Caco-2 (cell line): ENCODE measurements at regions of chr6 and their contacts with region 1.

Region 1: GRCh38 chr6:114747987-114748630 is 405.3 kb upstream of the HS3ST5 start:
- DNase-seq: peak; percentile 33 to 64
- H3K4me3 ChIP-seq: no peak overlapping the region
- H3K4me3 Mint-ChIP-seq: no peak overlapping the region
- H3K27ac Mint-ChIP-seq: no peak overlapping the region
- H3K4me1 ChIP-seq: no peaks in the 10 kb centered on the region
- H3K4me1 Mint-ChIP-seq: no peaks in the 10 kb centered on the region
- H3K27me3 ChIP-seq: no peaks in the 10 kb centered on the region
- H3K27me3 Mint-ChIP-seq: no peaks in the 10 kb centered on the region
- CTCF ChIP-seq: peak; percentile 67 to 73

Region 2: GRCh38 chr6:114342826-114343780 is 405.0 kb before region 1 on chr6 and contains the start of gene HS3ST5:
- CTCF ChIA-PET with region 1: no interaction called
- POLR2A ChIA-PET with region 1: no interaction called
- intact Hi-C with region 1: loop called (anchors 5 kb)
- DNase-seq: peak; percentile 64 to 79
- H3K4me3 ChIP-seq: peak within 1 kb of the TSS; percentile 54
- H3K4me3 Mint-ChIP-seq: peak within 1 kb of the TSS; percentile 76
- H3K27ac Mint-ChIP-seq: no peak within 1 kb of the TSS
- H3K4me1 ChIP-seq: 0 out of 2 replicates have a peak, but pooled peaks cover 4% of the 10 kb centered on the region
- H3K4me1 Mint-ChIP-seq: no peaks in the 10 kb centered on the region
- H3K27me3 ChIP-seq: no peaks in the 10 kb centered on the region
- H3K27me3 Mint-ChIP-seq: peaks cover 9% of the 10 kb centered on the region
- CTCF ChIP-seq: peak; percentile 58 to 66
- total RNA-seq, gene HS3ST5: 0.28 and 0.29 TPM in 2 replicates

Region 3: DNA sequence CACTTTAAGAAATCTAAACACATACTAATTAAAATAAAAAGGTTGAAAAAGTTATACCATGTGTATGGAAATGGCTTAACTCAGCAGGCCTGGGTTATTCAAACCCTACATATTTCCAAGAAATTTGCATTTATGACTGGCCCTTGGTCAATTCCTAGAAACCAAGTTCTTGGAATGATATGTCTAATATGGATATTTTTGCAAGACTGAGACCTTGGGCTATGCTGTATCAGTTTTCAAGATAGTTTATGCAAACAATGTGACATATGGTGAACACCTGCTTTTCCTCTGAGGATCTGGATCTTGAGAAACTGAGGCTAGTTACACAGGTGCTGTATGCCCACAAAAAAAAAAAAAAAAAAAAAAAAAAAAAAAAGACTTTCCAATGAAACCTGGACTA is 131.6 kb after region 1 on chr6:
- CTCF ChIA-PET with region 1: no interaction called
- POLR2A ChIA-PET with region 1: no interaction called
- intact Hi-C with region 1: loop called (anchors 10 kb)
- DNase-seq: no peak
- H3K4me3 ChIP-seq: no peak overlapping the region
- H3K4me3 Mint-ChIP-seq: no peak overlapping the region
- H3K27ac Mint-ChIP-seq: no peak overlapping the region
- H3K4me1 ChIP-seq: no peaks in the 10 kb centered on the region
- H3K4me1 Mint-ChIP-seq: no peaks in the 10 kb centered on the region
- H3K27me3 ChIP-seq: no peaks in the 10 kb centered on the region
- H3K27me3 Mint-ChIP-seq: peaks cover 4% of the 10 kb centered on the region
- CTCF ChIP-seq: no peak

Region 4: DNA sequence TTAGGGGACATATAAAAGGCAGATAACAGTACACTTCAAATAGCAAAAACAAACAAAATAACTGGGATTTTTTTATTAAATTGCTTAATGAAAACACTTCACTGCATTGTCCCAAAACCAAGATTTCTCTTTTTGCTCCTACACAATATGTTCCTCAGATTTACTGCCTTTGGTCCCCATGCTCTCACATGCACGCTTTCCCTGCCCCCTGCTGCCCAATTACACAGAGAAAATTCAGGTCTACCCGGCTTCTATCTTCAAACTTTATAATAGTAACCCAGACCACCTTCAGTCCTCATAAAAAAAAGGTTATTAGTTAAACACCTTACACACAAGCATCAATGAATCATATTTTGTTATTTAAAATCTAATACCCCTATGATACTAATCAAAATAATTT is 268.5 kb after region 1 on chr6:
- CTCF ChIA-PET with region 1: no interaction called
- POLR2A ChIA-PET with region 1: no interaction called
- intact Hi-C with region 1: loop called (anchors 2 kb)
- DNase-seq: peak in 1 of 2 experiments; percentile 6
- H3K4me3 ChIP-seq: no peak overlapping the region
- H3K4me3 Mint-ChIP-seq: no peak overlapping the region
- H3K27ac Mint-ChIP-seq: no peak overlapping the region
- H3K4me1 ChIP-seq: no peaks in the 10 kb centered on the region
- H3K4me1 Mint-ChIP-seq: no peaks in the 10 kb centered on the region
- H3K27me3 ChIP-seq: no peaks in the 10 kb centered on the region
- H3K27me3 Mint-ChIP-seq: no peaks in the 10 kb centered on the region
- CTCF ChIP-seq: no peak

Region 5: DNA sequence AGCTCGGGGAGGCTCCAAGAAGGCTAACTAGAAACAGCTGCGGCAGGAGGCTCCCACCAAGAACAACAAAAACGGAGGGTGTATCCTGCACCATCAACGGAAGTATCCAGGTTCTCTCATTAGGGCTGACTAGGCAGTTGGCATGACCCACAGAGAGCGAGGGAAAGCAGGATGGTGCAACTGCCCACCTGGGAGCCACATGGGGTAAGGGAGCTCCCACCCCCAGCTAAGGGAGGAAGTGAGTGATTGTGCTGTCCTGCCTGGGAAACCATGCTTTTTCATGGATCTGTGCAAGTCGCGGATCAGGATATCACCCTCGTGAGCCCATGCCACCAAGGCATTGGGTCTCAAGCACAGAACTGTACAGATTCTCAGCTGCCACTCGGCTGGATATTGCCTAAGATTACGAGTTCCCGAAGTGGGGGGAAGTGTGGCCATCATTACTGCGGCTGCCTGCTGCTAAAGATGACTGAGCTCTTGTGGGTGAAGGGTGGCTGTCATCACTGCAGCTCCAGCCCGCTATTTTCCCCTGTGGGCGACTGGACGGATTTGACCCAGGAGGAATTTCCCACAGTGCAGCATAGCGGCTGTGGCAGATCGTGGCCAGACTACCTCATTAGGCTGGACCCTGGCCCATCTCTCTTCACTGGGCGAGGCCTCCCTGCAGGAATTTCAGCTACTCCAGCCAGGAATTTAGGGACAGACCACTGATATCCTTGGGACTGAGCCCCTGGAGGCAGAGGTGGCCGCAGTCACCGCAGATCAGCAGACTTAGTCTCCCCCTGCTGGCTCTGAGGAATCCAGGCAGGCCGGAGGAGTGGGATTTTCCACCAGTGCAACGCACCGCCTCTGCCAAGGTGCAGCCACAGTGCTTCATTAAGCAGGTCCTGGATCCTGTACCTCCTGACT is 796.9 kb after region 1 on chr6:
- CTCF ChIA-PET with region 1: no interaction called
- POLR2A ChIA-PET with region 1: no interaction called
- intact Hi-C with region 1: loop called (anchors 2 kb)
- DNase-seq: peak; percentile 47 to 59
- H3K4me3 ChIP-seq: peak overlapping the region; percentile 9; the same call in 1 of the 2 replicates
- H3K4me3 Mint-ChIP-seq: no peak overlapping the region
- H3K27ac Mint-ChIP-seq: no peak overlapping the region
- H3K4me1 ChIP-seq: no peaks in the 10 kb centered on the region
- H3K4me1 Mint-ChIP-seq: no peaks in the 10 kb centered on the region
- H3K27me3 ChIP-seq: no peaks in the 10 kb centered on the region
- H3K27me3 Mint-ChIP-seq: peaks cover 5% of the 10 kb centered on the region
- CTCF ChIP-seq: peak; percentile 56 to 59

Region 6: GRCh38 chr6:115896538-115897129 is 1148.5 kb after region 1 on chr6:
- CTCF ChIA-PET with region 1: no interaction called
- POLR2A ChIA-PET with region 1: no interaction called
- intact Hi-C with region 1: loop called (anchors 1 kb)
- DNase-seq: peak in 1 of 2 experiments; percentile 46
- H3K4me3 ChIP-seq: no peak overlapping the region
- H3K4me3 Mint-ChIP-seq: no peak overlapping the region
- H3K27ac Mint-ChIP-seq: no peak overlapping the region
- H3K4me1 ChIP-seq: no peaks in the 10 kb centered on the region
- H3K4me1 Mint-ChIP-seq: no peaks in the 10 kb centered on the region
- H3K27me3 ChIP-seq: no peaks in the 10 kb centered on the region
- H3K27me3 Mint-ChIP-seq: peaks cover 4% of the 10 kb centered on the region
- CTCF ChIP-seq: peak; percentile 57 to 73